ENCODE measurements at regions of chr14 and their contacts with region 1.

Region 1: DNA sequence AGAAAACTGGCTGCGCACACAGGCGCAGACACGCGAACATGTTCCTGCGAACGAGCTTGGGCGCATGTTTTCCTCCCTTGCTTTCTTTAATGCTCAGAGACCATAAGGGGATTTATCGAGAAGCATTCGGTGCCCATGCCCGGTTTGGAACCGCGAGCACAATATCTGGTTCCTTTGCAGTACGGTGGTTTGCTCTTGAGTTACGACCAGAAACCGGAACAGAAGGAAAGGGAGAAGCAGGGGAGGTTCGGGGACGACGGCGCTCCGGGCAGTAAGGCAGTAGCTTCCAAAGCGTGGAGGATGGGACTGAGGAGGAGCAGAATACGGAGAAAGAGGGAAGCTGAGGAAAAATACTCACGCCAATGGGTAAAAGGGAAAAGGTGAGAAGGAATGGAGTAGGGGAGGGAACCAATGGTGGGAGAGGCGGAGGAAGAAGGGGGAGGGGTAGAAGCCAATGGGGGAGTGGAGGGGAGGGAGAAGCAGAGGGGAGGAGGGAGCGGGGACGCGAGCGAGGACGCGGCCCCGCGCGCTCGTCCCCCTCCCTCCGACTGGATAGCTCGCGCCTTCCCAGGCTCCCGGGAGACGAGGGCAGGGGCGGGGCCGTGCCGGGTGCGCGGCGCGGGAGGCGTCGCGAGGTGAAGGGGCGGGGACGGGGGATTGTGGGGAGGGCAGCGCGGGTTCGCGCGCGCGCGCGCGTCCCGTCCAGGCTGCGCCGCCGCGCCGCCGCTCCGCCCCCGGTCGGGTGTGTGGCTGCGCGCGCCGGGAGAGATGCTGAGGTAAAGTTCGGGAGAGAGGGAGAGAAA is 625 bp upstream of the ARHGAP5 start:
- DNase-seq: peak; percentile 50 to 58 (median 55)
- H3K4me3 ChIP-seq: peak overlapping the region; percentile 79 to 99 (median 87)
- H3K4me3 Mint-ChIP-seq: peak overlapping the region; percentile 97 to 99
- H3K27ac ChIP-seq: peak overlapping the region; percentile 51 to 71
- H3K27ac Mint-ChIP-seq: peak overlapping the region; percentile 66 to 93 (median 86)
- H3K4me1 ChIP-seq: peaks cover 16 to 26% of the 10 kb centered on the region in 2 donors
- H3K4me1 Mint-ChIP-seq: peaks cover 27% of the 10 kb centered on the region
- H3K27me3 ChIP-seq: peaks cover 12 to 30% of the 10 kb centered on the region in 2 donors
- H3K27me3 Mint-ChIP-seq: peaks cover 8 to 34% (median 20%) of the 10 kb centered on the region in 3 donors
- CTCF ChIP-seq: no peak

Region 2: DNA sequence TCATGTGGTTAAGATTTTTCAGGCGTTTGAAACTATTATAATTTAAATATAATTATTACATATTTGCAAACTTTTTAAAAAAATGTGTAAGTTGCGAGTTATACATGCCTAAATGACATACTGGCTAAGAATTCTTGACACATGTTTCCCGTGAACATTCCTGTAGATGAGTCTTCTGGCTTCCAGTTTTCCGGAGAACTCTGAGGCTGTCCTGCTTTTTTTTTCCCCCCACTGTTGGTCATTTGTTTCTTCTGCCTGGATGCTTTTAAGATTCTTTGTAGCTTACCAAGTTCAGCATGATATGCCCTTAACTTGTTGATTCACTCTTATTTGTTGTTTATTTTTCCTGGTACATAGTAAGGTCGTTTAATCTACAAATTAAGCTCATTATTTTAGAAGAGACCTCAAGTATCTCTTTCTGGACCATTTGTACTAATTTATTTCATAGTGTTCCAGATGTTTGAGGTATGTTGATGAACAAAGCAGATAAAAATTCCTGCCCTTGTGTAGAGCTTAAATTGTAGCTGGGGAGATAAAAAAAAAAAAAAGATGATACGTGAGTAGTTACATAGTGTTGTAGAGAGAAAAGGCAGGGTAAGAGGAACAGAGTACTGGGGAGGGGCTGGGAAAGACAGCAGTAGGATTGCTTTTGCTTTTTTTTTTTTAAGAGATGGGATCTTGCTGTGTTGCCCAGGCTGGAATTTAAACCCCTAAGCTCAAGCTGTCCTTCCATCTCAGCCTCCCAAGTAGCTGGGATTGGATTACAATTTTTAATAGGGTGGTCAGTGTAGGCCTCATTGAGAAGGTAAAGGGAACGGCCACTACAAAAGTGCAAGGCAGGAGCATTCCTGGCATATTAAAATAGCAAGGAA is 33.4 kb after region 1 on chr14:
- intact Hi-C with region 1: no loop called
- DNase-seq: no peak
- H3K4me3 ChIP-seq: no peak overlapping the region
- H3K4me3 Mint-ChIP-seq: no peak overlapping the region
- H3K27ac ChIP-seq: no peak overlapping the region
- H3K27ac Mint-ChIP-seq: peak overlapping the region in 1 of 7 donors; percentile 28
- H3K4me1 ChIP-seq: no peaks in the 10 kb centered on the region
- H3K4me1 Mint-ChIP-seq: no peaks in the 10 kb centered on the region
- H3K27me3 ChIP-seq: no peaks in the 10 kb centered on the region
- H3K27me3 Mint-ChIP-seq: peaks cover 0 to 1% (median 0%) of the 10 kb centered on the region in 3 donors
- CTCF ChIP-seq: no peak

Region 3: DNA sequence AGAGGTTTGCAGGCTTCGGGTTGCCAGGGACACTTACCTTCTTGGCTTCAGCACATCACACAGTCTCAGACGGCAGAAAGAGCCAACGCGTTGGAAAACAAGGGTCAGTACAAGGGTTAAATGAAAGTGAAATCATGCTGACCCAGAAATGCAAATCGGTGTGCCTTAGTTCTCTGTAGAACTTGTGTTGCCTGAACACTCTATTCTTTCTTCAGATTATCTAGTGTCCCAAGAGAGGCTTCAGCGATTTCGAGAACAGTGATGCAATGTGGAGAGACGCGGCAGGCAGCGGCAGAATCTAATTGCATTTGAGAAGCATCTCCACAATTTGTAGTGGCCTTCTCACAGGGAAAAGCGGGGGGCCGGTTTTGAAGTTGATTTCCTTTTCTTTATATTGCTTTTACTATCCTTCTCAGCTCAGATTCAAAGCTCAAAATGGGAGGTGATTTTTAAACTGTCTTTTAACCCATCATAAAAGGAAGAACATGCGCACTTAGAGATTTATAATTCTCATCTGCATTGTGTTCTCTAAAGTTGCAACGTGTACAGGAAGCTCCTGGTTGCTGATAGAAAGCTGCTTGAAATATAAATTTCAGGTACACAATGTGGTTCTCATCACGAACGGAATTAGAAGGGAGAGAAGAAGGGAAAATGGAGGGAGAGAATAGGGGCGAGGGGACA is 1942.2 kb after region 1 on chr14:
- intact Hi-C with region 1: loop called in 1 of 2 experiments (anchors 10 kb)
- DNase-seq: peak in 1 of 3 donors; percentile 2
- H3K4me3 ChIP-seq: peak overlapping the region in 2 of 3 experiments; percentile 32 to 38
- H3K4me3 Mint-ChIP-seq: peak overlapping the region; percentile 70 to 77
- H3K27ac ChIP-seq: no peak overlapping the region
- H3K27ac Mint-ChIP-seq: peak overlapping the region in 3 of 7 donors; percentile 5 to 26 (median 8)
- H3K4me1 ChIP-seq: peaks cover 10 to 14% of the 10 kb centered on the region in 2 donors
- H3K4me1 Mint-ChIP-seq: peaks cover 35% of the 10 kb centered on the region
- H3K27me3 ChIP-seq: no peaks in the 10 kb centered on the region
- H3K27me3 Mint-ChIP-seq: no peaks in the 10 kb centered on the region
- CTCF ChIP-seq: no peak